MCF 10A (cell line): ENCODE measurements at regions of chr18 and their contacts with region 1.

Region 1: GRCh38 chr18:35386600-35387351 is 9.6 kb upstream of the ZNF396 start:
- DNase-seq: peak; percentile 84
- H3K4me3 Mint-ChIP-seq: no peak overlapping the region
- H3K27ac Mint-ChIP-seq: no peak overlapping the region
- H3K4me1 Mint-ChIP-seq: peaks cover 9% of the 10 kb centered on the region
- H3K27me3 Mint-ChIP-seq: no peaks in the 10 kb centered on the region
- CTCF ChIP-seq: peak; percentile 86

Region 2: DNA sequence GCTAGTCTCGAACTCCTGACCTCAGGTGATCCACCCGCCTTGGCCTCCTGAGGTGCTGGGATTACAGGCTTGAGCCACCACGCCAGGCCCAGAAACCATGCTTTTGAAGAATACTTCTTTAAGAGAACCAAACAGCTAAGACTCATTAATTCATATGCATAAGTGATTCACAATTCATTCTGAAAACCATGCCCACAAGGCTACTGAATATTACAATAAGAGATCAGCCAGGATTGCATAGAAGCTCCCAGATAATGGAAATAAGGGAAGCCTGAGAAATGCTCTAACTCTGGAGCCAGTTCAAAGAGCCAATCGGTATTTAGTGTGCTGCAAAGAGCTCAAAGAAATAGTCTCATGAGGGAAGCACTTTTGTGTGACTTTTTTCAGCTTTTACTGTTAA is 12.1 kb before region 1 on chr18:
- CTCF ChIA-PET with region 1: interaction called, 25 read pairs
- POLR2A ChIA-PET with region 1: interaction called, 3 read pairs
- intact Hi-C with region 1: no loop called
- DNase-seq: no peak
- H3K4me3 Mint-ChIP-seq: no peak overlapping the region
- H3K27ac Mint-ChIP-seq: no peak overlapping the region
- H3K4me1 Mint-ChIP-seq: peaks cover 15% of the 10 kb centered on the region
- H3K27me3 Mint-ChIP-seq: no peaks in the 10 kb centered on the region
- CTCF ChIP-seq: no peak

Region 3: GRCh38 chr18:35397976-35398375 is 11.2 kb after region 1 on chr18:
- CTCF ChIA-PET with region 1: interaction called, 53 read pairs
- POLR2A ChIA-PET with region 1: interaction called, 3 read pairs
- intact Hi-C with region 1: no loop called
- DNase-seq: no peak
- H3K4me3 Mint-ChIP-seq: no peak overlapping the region
- H3K27ac Mint-ChIP-seq: no peak overlapping the region
- H3K4me1 Mint-ChIP-seq: no peaks in the 10 kb centered on the region
- H3K27me3 Mint-ChIP-seq: no peaks in the 10 kb centered on the region
- CTCF ChIP-seq: no peak